CD4-positive, alpha-beta memory T cell (primary cell): ENCODE measurements at regions of chr2 and their contacts with region 1.

Region 1: DNA sequence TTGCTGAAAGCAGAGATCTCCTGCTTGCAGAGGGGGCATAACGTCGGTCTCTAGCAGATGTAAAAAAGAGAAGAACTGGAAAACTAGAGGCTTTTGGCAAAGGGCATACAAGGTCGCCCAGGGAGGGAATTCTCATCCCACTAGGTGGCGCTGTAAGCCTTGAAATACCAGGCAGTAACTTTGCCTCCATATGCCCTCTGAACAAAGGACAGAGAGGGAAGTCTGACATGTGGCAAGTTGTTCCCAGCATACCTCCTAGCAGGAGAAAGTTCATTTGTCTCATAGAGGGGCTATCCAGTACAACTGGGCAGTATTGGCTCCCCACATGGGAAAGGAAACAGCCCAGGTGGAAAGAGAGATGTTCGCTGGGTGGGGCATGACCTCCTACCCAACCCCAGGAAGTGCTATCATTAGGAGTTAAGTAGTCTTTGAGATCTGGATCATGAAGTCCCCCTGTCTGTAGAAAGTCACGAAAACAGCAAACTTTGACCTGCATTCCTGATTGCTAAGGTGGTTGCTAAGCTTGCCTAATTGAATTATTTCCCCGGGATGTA is 39.9 kb downstream of the STK17B start:
- DNase-seq: peak; percentile 50 to 64 (median 60)
- H3K4me3 ChIP-seq: no peak overlapping the region
- H3K4me3 Mint-ChIP-seq: peak overlapping the region in 6 of 8 donors; percentile 6 to 62 (median 34)
- H3K27ac ChIP-seq: peak overlapping the region; percentile 33
- H3K27ac Mint-ChIP-seq: peak overlapping the region in 6 of 7 donors; percentile 66 to 94 (median 89)
- H3K4me1 ChIP-seq: peaks cover 12% of the 10 kb centered on the region
- H3K4me1 Mint-ChIP-seq: peaks cover 3 to 18% (median 10%) of the 10 kb centered on the region in 4 donors
- H3K27me3 ChIP-seq: no peaks in the 10 kb centered on the region
- H3K27me3 Mint-ChIP-seq: no peaks in the 10 kb centered on the region

Region 2: DNA sequence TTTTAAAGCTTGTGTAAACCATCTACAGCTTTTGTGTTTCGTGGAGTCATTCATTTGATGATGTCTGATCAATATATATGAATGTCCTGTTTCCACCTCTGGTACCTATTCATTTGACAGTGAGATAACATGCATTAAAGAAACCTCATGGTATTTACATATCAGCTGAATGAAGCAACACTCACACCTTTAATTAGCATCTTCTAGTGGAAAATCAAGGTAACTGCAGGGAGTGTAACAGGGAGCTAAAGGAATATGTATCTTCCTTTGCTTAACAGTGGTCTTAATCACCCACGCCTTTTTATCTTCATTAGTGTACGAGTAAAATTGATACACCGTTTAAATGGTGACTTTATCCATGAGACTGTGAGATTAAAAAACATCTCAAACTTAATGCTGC is 458.8 kb before region 1 on chr2:
- CTCF ChIA-PET with region 1: no interaction called
- POLR2A ChIA-PET with region 1: no interaction called
- intact Hi-C with region 1: no loop called
- DNase-seq: no peak
- H3K4me3 ChIP-seq: no peak overlapping the region
- H3K4me3 Mint-ChIP-seq: no peak overlapping the region
- H3K27ac ChIP-seq: no peak overlapping the region
- H3K27ac Mint-ChIP-seq: no peak overlapping the region
- H3K4me1 ChIP-seq: peaks cover 20% of the 10 kb centered on the region
- H3K4me1 Mint-ChIP-seq: peaks cover 23 to 47% (median 32%) of the 10 kb centered on the region in 4 donors
- H3K27me3 ChIP-seq: no peaks in the 10 kb centered on the region
- H3K27me3 Mint-ChIP-seq: no peaks in the 10 kb centered on the region

Region 3: GRCh38 chr2:196149948-196150347 is 18.5 kb after region 1 on chr2:
- CTCF ChIA-PET with region 1: interaction called, 4 read pairs
- POLR2A ChIA-PET with region 1: interaction called, 9 read pairs
- intact Hi-C with region 1: loop called (anchors 2 kb)
- DNase-seq: no peak
- H3K4me3 ChIP-seq: no peak overlapping the region
- H3K4me3 Mint-ChIP-seq: peak overlapping the region in 7 of 8 donors; percentile 13 to 75 (median 38)
- H3K27ac ChIP-seq: peak overlapping the region; percentile 43
- H3K27ac Mint-ChIP-seq: peak overlapping the region; percentile 42 to 92 (median 85)
- H3K4me1 ChIP-seq: peaks cover 94% of the 10 kb centered on the region
- H3K4me1 Mint-ChIP-seq: peaks cover 59 to 99% (median 77%) of the 10 kb centered on the region in 4 donors
- H3K27me3 ChIP-seq: no peaks in the 10 kb centered on the region
- H3K27me3 Mint-ChIP-seq: no peaks in the 10 kb centered on the region

Region 4: GRCh38 chr2:196337208-196337953 is 205.9 kb after region 1 on chr2:
- CTCF ChIA-PET with region 1: interaction called, 12 read pairs
- POLR2A ChIA-PET with region 1: no interaction called
- intact Hi-C with region 1: loop called (anchors 1 kb)
- DNase-seq: peak in 4 of 5 donors; percentile 23 to 32 (median 24)
- H3K4me3 ChIP-seq: no peak overlapping the region
- H3K4me3 Mint-ChIP-seq: no peak overlapping the region
- H3K27ac ChIP-seq: no peak overlapping the region
- H3K27ac Mint-ChIP-seq: no peak overlapping the region
- H3K4me1 ChIP-seq: peaks cover 4% of the 10 kb centered on the region
- H3K4me1 Mint-ChIP-seq: peaks cover 0 to 7% (median 1%) of the 10 kb centered on the region in 4 donors
- H3K27me3 ChIP-seq: no peaks in the 10 kb centered on the region
- H3K27me3 Mint-ChIP-seq: peaks cover 0 to 1% of the 10 kb centered on the region in 2 donors

Region 5: GRCh38 chr2:196453613-196454047 is 322.2 kb after region 1 on chr2:
- CTCF ChIA-PET with region 1: interaction called, 9 read pairs
- POLR2A ChIA-PET with region 1: no interaction called
- intact Hi-C with region 1: loop called (anchors 1 kb)
- DNase-seq: peak in 4 of 5 donors; percentile 14 to 26 (median 20)
- H3K4me3 ChIP-seq: no peak overlapping the region
- H3K4me3 Mint-ChIP-seq: no peak overlapping the region
- H3K27ac ChIP-seq: no peak overlapping the region
- H3K27ac Mint-ChIP-seq: no peak overlapping the region
- H3K4me1 ChIP-seq: no peaks in the 10 kb centered on the region
- H3K4me1 Mint-ChIP-seq: peaks cover 0 to 4% (median 1%) of the 10 kb centered on the region in 4 donors
- H3K27me3 ChIP-seq: peaks cover 8% of the 10 kb centered on the region
- H3K27me3 Mint-ChIP-seq: peaks cover 13 to 24% of the 10 kb centered on the region in 2 donors